Calu3 (cell line): ENCODE measurements at regions of chr1 and their contacts with region 1.

Region 1: DNA sequence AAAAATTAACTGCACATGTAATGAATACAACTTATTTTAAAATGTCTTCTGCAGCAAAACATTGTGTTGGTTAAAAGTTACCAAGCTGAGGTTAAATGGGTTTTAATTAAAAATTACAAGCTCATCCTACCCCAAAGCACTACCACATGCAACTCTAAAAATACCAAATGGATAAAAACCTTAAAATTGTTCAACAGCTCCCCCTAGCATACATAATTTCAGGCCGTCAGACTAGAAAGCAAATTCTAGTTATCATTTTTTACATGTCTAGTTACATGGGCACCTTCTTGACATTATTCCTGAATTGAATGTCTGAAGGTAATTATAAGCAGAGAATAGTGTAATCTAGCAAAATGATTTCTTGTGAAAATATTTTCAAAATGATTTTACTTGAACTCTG is 176.5 kb downstream of the C1orf21 start:
- DNase-seq: peak; percentile 18
- H3K4me3 Mint-ChIP-seq: no peak overlapping the region
- H3K27ac Mint-ChIP-seq: no peak overlapping the region
- H3K4me1 Mint-ChIP-seq: peaks cover 15% of the 10 kb centered on the region
- H3K27me3 Mint-ChIP-seq: no peaks in the 10 kb centered on the region
- CTCF ChIP-seq: peak; percentile 29

Region 2: DNA sequence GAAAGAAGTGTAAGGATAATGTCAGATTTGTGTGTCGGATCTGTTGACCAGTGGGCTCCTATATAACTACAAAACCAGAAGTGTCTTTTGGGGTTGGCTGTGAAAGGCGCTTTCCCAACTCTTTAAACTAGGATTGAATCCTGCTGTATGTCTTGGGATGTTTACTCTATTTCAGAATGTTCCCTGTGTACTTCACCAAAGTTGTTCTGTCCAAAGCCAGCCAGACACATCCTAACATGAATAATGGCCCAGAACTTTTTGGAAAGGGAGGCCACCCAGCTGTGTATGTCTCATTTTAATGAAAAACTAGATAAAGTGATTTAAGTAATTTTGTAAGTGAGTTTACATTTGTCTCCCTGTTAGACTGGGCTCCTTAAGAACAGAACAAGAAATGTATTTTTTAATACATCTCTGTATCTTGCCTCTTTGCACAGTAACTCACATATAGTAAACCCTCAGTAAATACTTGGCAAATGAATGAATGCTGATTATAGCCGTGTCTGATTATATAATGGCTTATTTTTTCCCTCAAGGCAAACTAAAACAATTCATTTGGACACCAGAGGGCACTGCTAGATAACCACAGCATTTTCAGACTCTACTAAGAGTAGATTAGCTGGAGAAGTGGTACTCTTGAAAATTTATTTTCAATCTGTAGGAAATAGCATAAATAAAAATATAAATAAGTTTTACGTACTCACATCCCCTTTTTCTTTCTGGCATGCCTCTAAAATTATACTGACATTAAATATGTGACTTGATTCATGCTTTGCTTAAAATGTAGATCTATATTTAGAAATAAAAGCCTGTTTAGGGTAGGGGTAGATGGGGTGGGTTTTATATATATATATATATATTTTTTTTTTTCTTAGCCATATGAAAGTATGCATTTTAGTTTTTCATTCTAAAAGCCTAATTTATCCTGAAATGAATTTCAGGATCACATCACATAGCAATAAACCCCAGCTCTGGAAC is 488.0 kb before region 1 on chr1:
- CTCF ChIA-PET with region 1: no interaction called
- intact Hi-C with region 1: loop called (anchors 2 kb)
- DNase-seq: peak; percentile 50
- H3K4me3 Mint-ChIP-seq: no peak overlapping the region
- H3K27ac Mint-ChIP-seq: no peak overlapping the region
- H3K4me1 Mint-ChIP-seq: no peaks in the 10 kb centered on the region
- H3K27me3 Mint-ChIP-seq: no peaks in the 10 kb centered on the region
- CTCF ChIP-seq: peak; percentile 51

Region 3: DNA sequence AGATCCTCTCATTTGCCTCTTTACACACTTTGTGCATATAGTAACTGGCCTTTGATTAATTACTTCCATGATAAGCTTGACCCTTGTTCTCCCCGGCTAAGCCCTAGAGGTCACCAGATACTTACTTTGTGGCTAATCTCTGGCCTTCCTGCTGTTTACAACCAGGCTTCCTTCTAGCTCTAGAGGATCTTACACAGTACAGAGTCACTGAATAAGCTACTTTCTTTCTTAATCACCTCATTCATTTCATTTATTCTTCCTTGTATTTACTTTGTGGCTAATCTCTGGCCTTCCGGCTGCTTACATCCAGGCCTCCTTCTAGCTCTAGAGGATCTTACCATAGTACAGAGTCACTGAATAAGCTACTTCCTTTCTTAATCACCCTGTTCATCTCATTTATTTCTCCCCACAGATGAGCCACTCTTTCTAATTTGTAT is 320.8 kb before region 1 on chr1:
- CTCF ChIA-PET with region 1: interaction called, 4 read pairs
- intact Hi-C with region 1: loop called (anchors 5 kb)
- DNase-seq: no peak
- H3K4me3 Mint-ChIP-seq: no peak overlapping the region
- H3K27ac Mint-ChIP-seq: no peak overlapping the region
- H3K4me1 Mint-ChIP-seq: peaks cover 14% of the 10 kb centered on the region
- H3K27me3 Mint-ChIP-seq: peaks cover 41% of the 10 kb centered on the region
- CTCF ChIP-seq: no peak

Region 4: DNA sequence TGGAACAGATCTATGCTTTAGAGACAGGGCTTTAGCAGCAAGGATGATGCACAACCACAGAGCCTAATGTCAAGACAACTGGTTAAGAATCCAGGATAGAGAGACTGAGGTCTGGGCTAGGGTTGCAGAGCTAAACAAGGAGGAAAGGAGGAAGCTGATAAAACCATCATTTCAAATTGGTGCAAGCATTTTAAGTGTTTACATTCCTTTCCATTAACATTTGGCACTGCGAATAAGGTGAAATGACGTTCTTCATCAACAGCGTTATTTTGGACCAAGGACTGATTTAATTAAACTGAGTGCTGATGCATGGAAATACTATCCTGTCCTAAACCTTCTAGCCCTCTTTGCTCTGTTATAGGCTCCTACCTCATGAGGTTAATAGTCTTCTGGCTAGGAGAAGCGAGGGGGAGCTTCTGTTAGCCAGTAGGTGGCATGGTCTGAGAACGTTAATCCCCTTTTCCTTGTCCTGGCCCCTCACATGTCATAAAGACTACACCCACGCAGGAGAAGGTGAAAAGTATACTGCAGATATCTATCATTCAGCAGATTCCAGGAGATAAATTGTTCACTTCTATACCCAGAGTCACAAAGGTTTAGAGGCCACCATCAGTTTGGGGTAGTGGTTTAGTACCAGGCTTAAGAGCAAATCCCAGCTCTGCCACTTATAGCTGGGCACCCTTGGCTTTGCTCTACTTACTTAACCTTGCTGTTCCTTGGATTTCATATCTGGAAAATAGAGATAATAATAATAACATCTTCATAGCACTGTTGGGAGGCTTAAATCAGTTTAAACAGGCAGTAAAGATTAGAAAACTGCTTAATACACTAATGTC is 184.0 kb before region 1 on chr1:
- CTCF ChIA-PET with region 1: interaction called, 9 read pairs
- intact Hi-C with region 1: loop called (anchors 1 kb)
- DNase-seq: peak; percentile 35
- H3K4me3 Mint-ChIP-seq: no peak overlapping the region
- H3K27ac Mint-ChIP-seq: no peak overlapping the region
- H3K4me1 Mint-ChIP-seq: peaks cover 8% of the 10 kb centered on the region
- H3K27me3 Mint-ChIP-seq: no peaks in the 10 kb centered on the region
- CTCF ChIP-seq: no peak

Region 5: DNA sequence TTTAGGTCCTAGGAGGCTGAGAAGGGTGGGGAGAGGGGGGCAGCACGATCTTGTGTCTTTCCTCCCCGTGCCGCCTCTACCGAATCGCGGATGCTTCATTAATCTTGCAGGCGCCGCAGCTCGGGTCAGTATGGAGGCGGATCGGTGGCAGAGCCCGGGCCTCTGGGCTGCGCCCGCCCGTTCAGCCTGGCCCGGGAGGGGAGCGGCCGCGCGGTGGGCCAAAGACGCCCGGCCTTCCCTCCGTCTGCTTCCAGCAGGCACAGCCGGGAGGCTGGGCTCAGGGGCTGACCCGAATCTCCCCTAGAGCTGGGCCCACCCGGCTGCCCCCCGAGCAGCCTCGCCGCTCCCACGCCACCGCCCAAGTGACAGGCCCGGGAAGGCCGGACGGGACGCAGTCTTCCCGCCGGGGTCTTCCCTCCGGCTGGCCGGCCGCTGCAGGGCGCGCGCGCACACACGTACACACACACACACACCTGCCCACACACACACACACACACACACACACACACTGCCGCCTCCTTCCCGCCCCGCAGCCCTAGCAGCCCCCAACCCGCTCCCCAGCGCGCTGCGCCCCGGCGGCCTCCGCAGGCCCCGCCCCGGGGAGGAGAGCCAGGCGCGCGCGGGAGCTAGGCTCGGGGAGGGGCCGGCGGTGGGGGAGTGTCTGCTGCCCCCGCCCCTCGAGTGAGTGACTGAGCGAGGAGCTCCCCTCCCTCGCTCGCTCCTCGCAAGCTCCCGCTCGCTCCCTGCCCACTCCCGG is 176.8 kb before region 1 on chr1 and contains the start of gene C1orf21:
- CTCF ChIA-PET with region 1: interaction called, 12 read pairs
- intact Hi-C with region 1: no loop called
- DNase-seq: peak; percentile 93
- H3K4me3 Mint-ChIP-seq: peak within 1 kb of the TSS; percentile 76
- H3K27ac Mint-ChIP-seq: peak within 1 kb of the TSS; percentile 19
- H3K4me1 Mint-ChIP-seq: peaks cover 19% of the 10 kb centered on the region
- H3K27me3 Mint-ChIP-seq: no peaks in the 10 kb centered on the region
- CTCF ChIP-seq: no peak
- total RNA-seq, gene C1orf21: 16.9 and 20.6 TPM in 2 replicates

Region 6: DNA sequence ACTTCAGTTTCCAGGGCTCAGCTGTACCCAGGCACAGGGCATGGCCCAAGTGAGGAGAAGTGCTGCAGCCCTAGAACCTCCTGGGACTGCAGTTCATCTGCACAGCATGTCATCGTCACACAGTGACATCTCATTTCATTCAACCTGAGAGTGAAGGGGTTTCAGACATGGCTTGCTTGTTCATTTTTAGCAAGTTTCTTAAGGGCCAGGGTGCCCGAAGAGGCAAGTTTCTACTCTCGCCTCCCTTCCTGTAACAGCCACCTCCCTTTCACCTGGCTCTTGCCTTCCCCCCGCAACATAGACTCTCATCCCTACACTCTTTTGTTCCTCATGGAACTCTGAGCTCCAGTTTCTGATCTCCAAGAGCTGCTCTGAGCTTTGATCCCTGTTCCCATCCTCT is 68.4 kb before region 1 on chr1:
- CTCF ChIA-PET with region 1: no interaction called
- intact Hi-C with region 1: loop called (anchors 5 kb)
- DNase-seq: no peak
- H3K4me3 Mint-ChIP-seq: no peak overlapping the region
- H3K27ac Mint-ChIP-seq: no peak overlapping the region
- H3K4me1 Mint-ChIP-seq: peaks cover 35% of the 10 kb centered on the region
- H3K27me3 Mint-ChIP-seq: no peaks in the 10 kb centered on the region
- CTCF ChIP-seq: no peak